ENCODE measurements at regions of chr9 and their contacts with region 1.

Region 1: GRCh38 chr9:113446323-113446740 is 17.2 kb upstream of the RGS3 start:
- DNase-seq: peak; percentile 50

Region 2: GRCh38 chr9:113492343-113493212 is 46.2 kb after region 1 on chr9:
- CTCF ChIA-PET with region 1: interaction called, 14 read pairs
- POLR2A ChIA-PET with region 1: no interaction called
- DNase-seq: no peak

Region 3: GRCh38 chr9:113657703-113658544 is 211.6 kb after region 1 on chr9:
- CTCF ChIA-PET with region 1: interaction called, 12 read pairs
- POLR2A ChIA-PET with region 1: no interaction called
- DNase-seq: peak; percentile 86